GM12878 (cell line): ENCODE measurements at regions of chr5 and their contacts with region 1.

Region 1: GRCh38 chr5:78795757-78796156 is 147.2 kb upstream of the LHFPL2 start:
- DNase-seq: no peak
- ATAC-seq: peak; percentile 79
- H3K4me3 ChIP-seq: no peak overlapping the region
- H3K27ac ChIP-seq: no peak overlapping the region
- H3K4me1 ChIP-seq: peaks cover 15% of the 10 kb centered on the region; the same call in 1 of the 2 replicates
- H3K27me3 ChIP-seq: no peaks in the 10 kb centered on the region
- CTCF ChIP-seq: no peak
- EP300 ChIP-seq: no peak
- POLR2A ChIP-seq: no peak
- RAD21 ChIP-seq: no peak

Region 2: GRCh38 chr5:78765756-78766411 is 29.9 kb before region 1 on chr5:
- CTCF ChIA-PET with region 1: no interaction called
- POLR2A ChIA-PET with region 1: interaction called, 7 read pairs
- RAD21 ChIA-PET with region 1: interaction called, 4 read pairs
- SMC1A ChIA-PET with region 1: interaction called, 10 read pairs
- in situ Hi-C with region 1: no loop called
- intact Hi-C with region 1: no loop called
- DNase-seq: no peak
- ATAC-seq: no peak
- H3K4me3 ChIP-seq: no peak overlapping the region
- H3K27ac ChIP-seq: no peak overlapping the region
- H3K4me1 ChIP-seq: peaks cover 25% of the 10 kb centered on the region
- H3K27me3 ChIP-seq: no peaks in the 10 kb centered on the region
- CTCF ChIP-seq: no peak
- EP300 ChIP-seq: no peak
- POLR2A ChIP-seq: no peak
- RAD21 ChIP-seq: no peak

Region 3: GRCh38 chr5:78816143-78816765 is 20.5 kb after region 1 on chr5:
- CTCF ChIA-PET with region 1: no interaction called
- POLR2A ChIA-PET with region 1: no interaction called
- RAD21 ChIA-PET with region 1: no interaction called
- SMC1A ChIA-PET with region 1: no interaction called
- in situ Hi-C with region 1: no loop called
- intact Hi-C with region 1: no loop called
- DNase-seq: no peak
- ATAC-seq: no peak
- H3K4me3 ChIP-seq: no peak overlapping the region
- H3K27ac ChIP-seq: no peak overlapping the region
- H3K4me1 ChIP-seq: no peaks in the 10 kb centered on the region
- H3K27me3 ChIP-seq: no peaks in the 10 kb centered on the region
- CTCF ChIP-seq: no peak
- EP300 ChIP-seq: no peak
- POLR2A ChIP-seq: no peak
- RAD21 ChIP-seq: no peak